ENCODE measurements at regions of chr10 and their contacts with region 1.

Region 1: DNA sequence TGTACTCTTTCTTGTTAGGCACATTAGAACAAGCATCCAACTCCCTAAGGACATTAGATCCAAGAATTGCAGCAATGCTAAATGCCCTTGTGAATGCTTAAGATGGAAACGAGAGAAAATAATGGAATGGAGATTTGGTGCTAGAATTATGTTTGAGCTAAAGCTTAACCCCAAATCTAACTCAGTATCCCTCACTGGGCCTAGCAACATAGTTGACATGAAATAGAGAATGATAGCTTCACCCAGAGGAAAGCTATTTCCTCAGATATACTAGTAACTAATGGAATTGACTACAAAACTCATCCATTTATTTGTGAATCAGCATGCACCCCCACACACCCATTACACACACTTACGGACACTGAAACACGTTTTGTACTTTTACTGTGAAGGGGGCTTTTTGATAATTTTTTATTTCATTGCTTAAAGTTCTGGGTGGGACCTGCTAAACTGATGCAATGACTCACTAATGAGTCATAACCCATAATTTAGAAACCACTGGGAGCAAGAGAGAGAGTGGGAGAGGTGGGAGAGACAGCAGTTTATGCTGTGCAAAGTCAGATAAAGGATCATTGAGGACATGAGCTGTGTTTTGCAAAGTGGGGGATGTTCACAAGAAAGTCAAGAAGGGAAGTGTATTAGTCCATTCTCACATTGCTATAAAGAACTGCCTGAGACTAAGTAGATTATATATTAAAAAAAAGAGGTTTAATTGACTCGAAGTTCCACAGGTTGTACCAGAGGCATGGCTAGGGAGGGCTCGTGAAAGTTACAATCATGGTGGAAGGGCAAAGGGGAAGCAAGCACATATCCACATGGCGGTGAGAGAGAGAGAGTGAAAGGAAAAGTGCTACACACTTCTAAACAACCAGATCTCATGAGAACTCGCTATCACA is 382.7 kb downstream of the SFMBT2 start:
- DNase-seq: no peak
- H3K4me3 ChIP-seq: no peak overlapping the region
- H3K27ac ChIP-seq: no peak overlapping the region
- H3K4me1 ChIP-seq: no peaks in the 10 kb centered on the region
- H3K27me3 ChIP-seq: no peaks in the 10 kb centered on the region
- CTCF ChIP-seq: no peak
- EP300 ChIP-seq: no peak
- POLR2A ChIP-seq: no peak
- RAD21 ChIP-seq: no peak

Region 2: DNA sequence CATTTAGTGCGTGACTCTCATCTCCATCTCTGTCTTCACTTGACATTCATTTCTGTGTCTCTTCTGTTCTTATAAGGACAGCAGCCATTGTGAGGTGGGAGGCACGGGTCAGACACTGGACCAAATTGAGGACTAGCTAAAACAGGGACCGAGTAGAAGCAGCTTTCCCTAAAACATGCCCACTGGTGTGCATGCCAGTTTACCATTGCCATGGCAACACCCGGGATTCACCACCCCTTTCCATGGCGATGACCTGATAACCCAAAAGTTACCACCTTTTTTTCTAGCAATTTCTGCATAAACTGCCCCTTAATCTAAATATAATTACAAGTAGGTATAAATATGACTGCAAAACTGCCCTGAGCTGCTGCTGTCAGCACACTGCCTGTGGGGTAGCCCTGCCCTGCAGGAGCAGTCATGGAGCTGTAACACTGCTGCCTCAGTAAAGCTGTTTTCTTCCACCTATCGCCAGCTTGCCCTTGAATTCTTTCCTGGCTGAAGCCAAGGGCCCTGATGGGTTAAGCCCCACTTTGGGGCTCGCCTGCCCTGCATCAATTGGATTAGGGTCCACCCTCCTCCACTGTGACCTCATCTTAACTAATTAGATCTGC is 13.7 kb after region 1 on chr10:
- CTCF ChIA-PET with region 1: interaction called, 15 read pairs
- POLR2A ChIA-PET with region 1: no interaction called
- DNase-seq: no peak
- H3K4me3 ChIP-seq: no peak overlapping the region
- H3K27ac ChIP-seq: no peak overlapping the region
- H3K4me1 ChIP-seq: no peaks in the 10 kb centered on the region
- H3K27me3 ChIP-seq: no peaks in the 10 kb centered on the region
- CTCF ChIP-seq: no peak
- EP300 ChIP-seq: no peak
- POLR2A ChIP-seq: no peak
- RAD21 ChIP-seq: no peak

Measured in H1 (cell line).